HCT116 (cell line): ENCODE measurements at regions of chr4 and their contacts with region 1.

Region 1: GRCh38 chr4:188971125-188971524 is 831.9 kb downstream of the TRIML1 start:
- DNase-seq: peak; percentile 13
- ATAC-seq: peak; percentile 73
- H3K4me3 ChIP-seq: no peak overlapping the region
- H3K27ac ChIP-seq: no peak overlapping the region
- H3K4me1 ChIP-seq: no peaks in the 10 kb centered on the region
- H3K27me3 ChIP-seq: no peaks in the 10 kb centered on the region
- CTCF ChIP-seq: peak; percentile 46 to 66 (median 50); a peak in 5 of 6 replicates
- POLR2A ChIP-seq: no peak
- RAD21 ChIP-seq: peak; percentile 62

Region 2: DNA sequence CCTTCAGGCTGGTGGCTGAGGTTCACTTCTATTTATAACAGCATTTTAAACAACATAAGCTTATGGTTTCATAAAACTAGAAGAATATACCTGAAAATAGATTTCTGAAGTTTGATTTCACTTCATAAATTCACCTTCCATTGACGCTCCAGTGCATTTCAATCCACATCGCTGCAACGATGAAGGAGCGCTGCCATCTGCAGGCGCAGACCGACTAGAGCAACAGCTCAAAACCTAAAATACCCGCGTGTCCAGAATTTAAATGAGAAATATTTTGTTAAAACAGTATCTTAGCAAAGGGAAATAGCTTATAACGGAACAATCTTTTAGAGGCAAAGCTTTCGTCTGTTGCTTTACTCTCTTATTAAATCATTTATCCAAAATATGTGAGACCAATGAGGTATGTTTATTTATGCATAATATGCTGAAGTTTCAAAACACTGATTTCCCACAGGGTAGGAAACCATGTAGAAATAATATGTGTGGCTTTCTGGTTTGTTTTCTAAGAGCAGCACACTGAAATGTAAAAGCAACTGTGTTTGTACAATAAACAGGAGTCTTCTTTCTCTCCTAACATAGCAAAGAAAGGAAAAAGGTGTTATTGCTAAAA is 153.1 kb after region 1 on chr4:
- CTCF ChIA-PET with region 1: no interaction called
- POLR2A ChIA-PET with region 1: no interaction called
- RAD21 ChIA-PET with region 1: interaction called in 1 of 2 experiments, 3 read pairs
- intact Hi-C with region 1: loop called (anchors 1 kb)
- DNase-seq: peak; percentile 22
- ATAC-seq: peak; percentile 82
- H3K4me3 ChIP-seq: no peak overlapping the region
- H3K27ac ChIP-seq: no peak overlapping the region
- H3K4me1 ChIP-seq: no peaks in the 10 kb centered on the region
- H3K27me3 ChIP-seq: no peaks in the 10 kb centered on the region
- CTCF ChIP-seq: peak; percentile 56 to 76 (median 64); a peak in 5 of 6 replicates
- POLR2A ChIP-seq: no peak
- RAD21 ChIP-seq: peak; percentile 89

Region 3: DNA sequence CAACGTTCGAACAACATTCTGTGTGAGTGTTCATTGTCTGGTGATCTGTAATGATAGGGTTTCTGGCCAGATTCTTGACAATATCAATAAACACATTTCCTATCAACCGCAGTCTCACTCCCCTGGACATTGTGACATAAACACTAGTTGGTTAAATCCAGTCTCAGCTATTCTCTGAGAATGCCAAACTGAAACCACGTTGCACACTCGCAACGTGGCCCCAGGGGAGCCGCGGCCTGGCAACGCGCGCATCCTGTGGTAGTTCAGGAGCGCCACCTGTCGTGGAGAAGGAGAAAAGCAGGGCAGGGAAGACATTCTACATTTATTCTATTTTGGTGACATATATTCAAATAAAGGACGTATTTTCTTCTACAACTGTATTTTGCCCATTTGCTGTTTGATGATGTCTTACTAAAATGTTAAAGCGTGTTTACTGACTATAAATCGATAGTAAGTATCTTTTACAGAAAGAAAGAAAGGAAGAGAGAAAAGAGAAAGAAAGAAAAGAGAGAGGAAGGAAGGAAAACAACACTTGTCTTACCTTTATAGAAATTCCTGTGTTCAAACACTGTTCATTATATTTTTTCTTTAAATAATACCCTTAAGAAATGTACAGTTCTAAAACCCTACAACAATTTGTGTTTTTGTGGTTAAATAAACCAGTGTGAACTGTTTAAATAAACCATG is 231.2 kb after region 1 on chr4:
- CTCF ChIA-PET with region 1: no interaction called
- POLR2A ChIA-PET with region 1: no interaction called
- RAD21 ChIA-PET with region 1: no interaction called
- intact Hi-C with region 1: loop called (anchors 10 kb)
- DNase-seq: peak; percentile 28
- ATAC-seq: peak; percentile 92
- H3K4me3 ChIP-seq: peak overlapping the region in 1 of 2 experiments; percentile 26; a peak in 2 of 4 replicates
- H3K27ac ChIP-seq: no peak overlapping the region
- H3K4me1 ChIP-seq: peaks cover 0 to 7% of the 10 kb centered on the region in 2 experiments; a peak in 2 of 4 replicates
- H3K27me3 ChIP-seq: no peaks in the 10 kb centered on the region
- CTCF ChIP-seq: peak; percentile 74 to 97 (median 82)
- POLR2A ChIP-seq: no peak
- RAD21 ChIP-seq: peak; percentile 93

Region 4: GRCh38 chr4:189279191-189279590 is 308.1 kb after region 1 on chr4:
- CTCF ChIA-PET with region 1: no interaction called
- POLR2A ChIA-PET with region 1: no interaction called
- RAD21 ChIA-PET with region 1: no interaction called
- intact Hi-C with region 1: no loop called
- DNase-seq: no peak
- ATAC-seq: no peak
- H3K4me3 ChIP-seq: no peak overlapping the region
- H3K27ac ChIP-seq: no peak overlapping the region
- H3K4me1 ChIP-seq: no peaks in the 10 kb centered on the region
- H3K27me3 ChIP-seq: no peaks in the 10 kb centered on the region
- CTCF ChIP-seq: no peak
- POLR2A ChIP-seq: no peak
- RAD21 ChIP-seq: no peak

Region 5: GRCh38 chr4:189792924-189793618 is 821.9 kb after region 1 on chr4:
- CTCF ChIA-PET with region 1: no interaction called
- POLR2A ChIA-PET with region 1: no interaction called
- RAD21 ChIA-PET with region 1: no interaction called
- intact Hi-C with region 1: no loop called
- DNase-seq: peak; percentile 54
- ATAC-seq: peak; percentile 97
- H3K4me3 ChIP-seq: no peak overlapping the region
- H3K27ac ChIP-seq: no peak overlapping the region
- H3K4me1 ChIP-seq: no peaks in the 10 kb centered on the region
- H3K27me3 ChIP-seq: peaks cover 14% of the 10 kb centered on the region; the same call in 1 of the 2 replicates
- CTCF ChIP-seq: peak; percentile 67 to 93 (median 90)
- POLR2A ChIP-seq: no peak
- RAD21 ChIP-seq: peak; percentile 93